H1 (cell line): ENCODE measurements at regions of chr19 and their contacts with region 1.

Region 1: DNA sequence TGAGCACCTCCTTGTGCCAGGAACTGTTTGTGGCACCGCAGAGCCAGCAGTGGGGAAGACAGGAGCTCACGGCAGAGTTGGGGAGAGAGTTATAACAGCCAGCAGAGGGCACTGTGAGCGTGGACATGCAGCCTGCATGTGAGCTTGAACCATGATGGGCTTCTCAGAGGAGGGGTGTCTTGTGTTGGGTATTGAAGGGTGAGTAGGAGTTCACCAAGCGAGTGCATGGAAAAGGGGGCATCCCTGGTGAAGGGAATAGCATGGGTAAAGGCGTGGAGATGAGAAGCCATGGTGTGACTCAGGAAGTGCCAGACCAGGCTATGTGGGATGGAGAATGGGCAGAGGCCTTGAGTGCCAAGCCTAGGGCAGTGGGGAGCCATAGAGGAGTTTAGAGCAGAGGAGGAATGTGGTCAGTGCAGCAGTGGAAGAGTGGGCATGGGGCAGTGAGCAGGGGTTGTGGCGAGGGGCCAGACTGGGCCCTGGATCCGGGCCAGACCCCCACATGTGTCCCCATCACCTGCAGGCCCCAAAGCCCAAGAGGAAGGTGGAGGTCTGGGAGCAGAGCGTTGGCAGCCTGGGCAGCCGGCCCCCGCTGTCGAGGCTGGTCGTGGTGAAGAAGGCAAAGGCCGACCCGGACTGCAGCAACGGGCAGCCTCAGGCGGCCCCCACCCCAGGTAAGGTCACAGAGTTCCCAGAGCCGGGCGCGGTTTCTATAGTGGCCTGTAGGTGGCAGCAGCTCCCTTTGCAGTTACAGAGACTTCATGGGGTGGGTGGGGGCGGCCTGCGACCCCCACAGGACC is 11.8 kb upstream of the SHD start:
- DNase-seq: peak; percentile 61 to 90
- H3K4me3 ChIP-seq: no peak overlapping the region
- H3K27ac ChIP-seq: no peak overlapping the region
- H3K4me1 ChIP-seq: no peaks in the 10 kb centered on the region; a peak in 1 of 7 replicates
- H3K27me3 ChIP-seq: no peaks in the 10 kb centered on the region
- CTCF ChIP-seq: peak; percentile 92 to 94 (median 94)
- EP300 ChIP-seq: no peak
- POLR2A ChIP-seq: no peak
- RAD21 ChIP-seq: peak; percentile 87 to 88

Region 2: DNA sequence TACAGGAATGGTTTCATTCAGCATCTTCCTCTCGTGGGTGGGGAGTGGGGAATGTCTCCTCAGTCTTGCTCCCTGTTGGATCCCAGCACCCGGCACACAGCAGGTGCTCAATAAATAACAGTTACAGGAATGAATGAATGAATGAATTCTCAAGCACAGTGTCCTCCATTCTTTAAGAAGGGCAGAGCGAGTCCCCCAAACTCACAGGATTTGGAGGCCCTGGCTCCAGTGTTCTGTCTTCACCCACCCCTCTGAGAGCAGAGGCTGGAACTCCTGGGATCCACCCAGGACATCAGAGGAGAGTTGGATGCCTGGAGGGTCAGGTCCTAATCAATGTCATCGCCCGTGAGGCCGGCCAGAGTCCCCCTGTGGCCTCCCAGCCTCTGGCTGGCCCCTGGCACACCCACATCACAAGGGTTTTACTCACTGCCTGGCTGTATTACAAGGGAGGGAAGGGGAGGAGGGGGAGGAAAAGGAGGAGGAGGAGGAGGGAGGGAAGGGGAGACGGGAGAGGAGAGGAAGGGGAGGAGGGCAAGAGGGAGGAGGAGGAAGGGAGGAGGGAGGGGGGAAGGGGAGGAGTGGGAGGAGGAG is 122.5 kb before region 1 on chr19:
- CTCF ChIA-PET with region 1: no interaction called
- POLR2A ChIA-PET with region 1: no interaction called
- DNase-seq: no peak
- H3K4me3 ChIP-seq: no peak overlapping the region
- H3K27ac ChIP-seq: no peak overlapping the region
- H3K4me1 ChIP-seq: no peaks in the 10 kb centered on the region; a peak in 1 of 7 replicates
- H3K27me3 ChIP-seq: no peaks in the 10 kb centered on the region; a peak in 1 of 7 replicates
- CTCF ChIP-seq: no peak
- EP300 ChIP-seq: no peak
- POLR2A ChIP-seq: no peak
- RAD21 ChIP-seq: no peak

Region 3: GRCh38 chr19:4174213-4174894 is 92.9 kb before region 1 on chr19:
- CTCF ChIA-PET with region 1: no interaction called
- POLR2A ChIA-PET with region 1: no interaction called
- DNase-seq: no peak
- H3K4me3 ChIP-seq: no peak overlapping the region
- H3K27ac ChIP-seq: no peak overlapping the region
- H3K4me1 ChIP-seq: peaks cover 0 to 2% (median 0%) of the 10 kb centered on the region in 4 experiments; a peak in 1 of 7 replicates
- H3K27me3 ChIP-seq: peaks cover 0 to 19% (median 5%) of the 10 kb centered on the region in 4 experiments; a peak in 5 of 7 replicates
- CTCF ChIP-seq: no peak
- EP300 ChIP-seq: no peak
- POLR2A ChIP-seq: no peak
- RAD21 ChIP-seq: no peak

Region 4: GRCh38 chr19:4246767-4247593 is 20.3 kb before region 1 on chr19 and contains the start of gene YJU2:
- CTCF ChIA-PET with region 1: interaction called, 10 read pairs
- POLR2A ChIA-PET with region 1: interaction called, 8 read pairs
- DNase-seq: peak; percentile 98
- H3K4me3 ChIP-seq: peak within 1 kb of the TSS; percentile 79 to 96 (median 90)
- H3K27ac ChIP-seq: peak within 1 kb of the TSS; percentile 98
- H3K4me1 ChIP-seq: peaks cover 0 to 4% (median 1%) of the 10 kb centered on the region in 4 experiments; a peak in 3 of 7 replicates
- H3K27me3 ChIP-seq: no peaks in the 10 kb centered on the region
- CTCF ChIP-seq: peak; percentile 45 to 65 (median 55)
- EP300 ChIP-seq: no peak
- POLR2A ChIP-seq: peak; percentile 90 to 97
- RAD21 ChIP-seq: peak; percentile 12 to 42; a peak in 3 of 4 replicates
- total RNA-seq, gene YJU2: 26.8 and 28.6 TPM in 2 replicates

Region 5: GRCh38 chr19:4278419-4279266 is 11.3 kb after region 1 on chr19 and contains the start of gene SHD:
- CTCF ChIA-PET with region 1: interaction called, 39 read pairs
- POLR2A ChIA-PET with region 1: interaction called, 11 read pairs
- DNase-seq: peak in 1 of 2 experiments; percentile 71
- H3K4me3 ChIP-seq: peak within 1 kb of the TSS; percentile 49 to 88 (median 57)
- H3K27ac ChIP-seq: no peak within 1 kb of the TSS
- H3K4me1 ChIP-seq: no peaks in the 10 kb centered on the region; a peak in 4 of 7 replicates
- H3K27me3 ChIP-seq: peaks cover 9 to 35% (median 29%) of the 10 kb centered on the region in 4 experiments
- CTCF ChIP-seq: peak in 1 of 3 experiments; percentile 14; a peak in 1 of 4 replicates
- EP300 ChIP-seq: no peak
- POLR2A ChIP-seq: no peak
- RAD21 ChIP-seq: no peak
- total RNA-seq, gene SHD: 5.8 and 7.3 TPM in 2 replicates

Region 6: GRCh38 chr19:4295972-4296771 is 28.9 kb after region 1 on chr19:
- CTCF ChIA-PET with region 1: interaction called, 47 read pairs
- POLR2A ChIA-PET with region 1: interaction called, 6 read pairs
- DNase-seq: no peak
- H3K4me3 ChIP-seq: no peak overlapping the region
- H3K27ac ChIP-seq: no peak overlapping the region
- H3K4me1 ChIP-seq: peaks cover 0 to 10% (median 1%) of the 10 kb centered on the region in 4 experiments; a peak in 4 of 7 replicates
- H3K27me3 ChIP-seq: no peaks in the 10 kb centered on the region
- CTCF ChIP-seq: no peak
- EP300 ChIP-seq: no peak
- POLR2A ChIP-seq: no peak
- RAD21 ChIP-seq: no peak

Region 7: GRCh38 chr19:4328243-4328990 is 61.1 kb after region 1 on chr19:
- CTCF ChIA-PET with region 1: interaction called, 71 read pairs
- POLR2A ChIA-PET with region 1: interaction called, 3 read pairs
- DNase-seq: peak; percentile 93 to 97
- H3K4me3 ChIP-seq: peak overlapping the region; percentile 70 to 80 (median 74)
- H3K27ac ChIP-seq: peak overlapping the region; percentile 60; the same call in 1 of the 2 replicates
- H3K4me1 ChIP-seq: peaks cover 0 to 6% (median 3%) of the 10 kb centered on the region in 4 experiments; a peak in 5 of 7 replicates
- H3K27me3 ChIP-seq: no peaks in the 10 kb centered on the region; a peak in 1 of 7 replicates
- CTCF ChIP-seq: no peak
- EP300 ChIP-seq: no peak
- POLR2A ChIP-seq: peak in 1 of 2 experiments; percentile 73; a peak in 1 of 3 replicates
- RAD21 ChIP-seq: no peak

Region 8: GRCh38 chr19:4362861-4363510 is 95.7 kb after region 1 on chr19:
- CTCF ChIA-PET with region 1: interaction called, 28 read pairs
- POLR2A ChIA-PET with region 1: interaction called, 3 read pairs
- DNase-seq: peak in 1 of 2 experiments; percentile 76
- H3K4me3 ChIP-seq: no peak overlapping the region
- H3K27ac ChIP-seq: no peak overlapping the region
- H3K4me1 ChIP-seq: peaks cover 0 to 13% (median 2%) of the 10 kb centered on the region in 4 experiments; a peak in 3 of 7 replicates
- H3K27me3 ChIP-seq: no peaks in the 10 kb centered on the region
- CTCF ChIP-seq: peak; percentile 60 to 77 (median 67)
- EP300 ChIP-seq: no peak
- POLR2A ChIP-seq: 0 out of 3 replicates have a peak, but pooled peaks of 1 of the 2 experiments have one; percentile 45
- RAD21 ChIP-seq: peak; percentile 51 to 58